Kidney (tissue), 22 donors: ENCODE measurements at regions of chr12 and their contacts with region 1.

Region 1: GRCh38 chr12:117025481-117026151 is 73.6 kb downstream of the TESC start:
- DNase-seq: peak; percentile 84 to 87 (median 87)
- H3K4me3 ChIP-seq: no peak overlapping the region
- H3K27ac ChIP-seq: no peak overlapping the region
- H3K4me1 ChIP-seq: peaks cover 0 to 5% (median 0%) of the 10 kb centered on the region in 3 donors
- H3K27me3 ChIP-seq: no peaks in the 10 kb centered on the region
- CTCF ChIP-seq: peak; percentile 91

Region 2: GRCh38 chr12:116863275-116863767 is 162.3 kb before region 1 on chr12:
- intact Hi-C with region 1: no loop called
- DNase-seq: no peak
- H3K4me3 ChIP-seq: no peak overlapping the region
- H3K27ac ChIP-seq: no peak overlapping the region
- H3K4me1 ChIP-seq: peaks cover 0 to 2% (median 0%) of the 10 kb centered on the region in 3 donors
- H3K27me3 ChIP-seq: no peaks in the 10 kb centered on the region
- CTCF ChIP-seq: peak; percentile 17

Region 3: GRCh38 chr12:116959845-116960514 is 65.6 kb before region 1 on chr12:
- intact Hi-C with region 1: no loop called
- DNase-seq: no peak
- H3K4me3 ChIP-seq: no peak overlapping the region
- H3K27ac ChIP-seq: no peak overlapping the region
- H3K4me1 ChIP-seq: no peaks in the 10 kb centered on the region
- H3K27me3 ChIP-seq: no peaks in the 10 kb centered on the region
- CTCF ChIP-seq: no peak

Region 4: DNA sequence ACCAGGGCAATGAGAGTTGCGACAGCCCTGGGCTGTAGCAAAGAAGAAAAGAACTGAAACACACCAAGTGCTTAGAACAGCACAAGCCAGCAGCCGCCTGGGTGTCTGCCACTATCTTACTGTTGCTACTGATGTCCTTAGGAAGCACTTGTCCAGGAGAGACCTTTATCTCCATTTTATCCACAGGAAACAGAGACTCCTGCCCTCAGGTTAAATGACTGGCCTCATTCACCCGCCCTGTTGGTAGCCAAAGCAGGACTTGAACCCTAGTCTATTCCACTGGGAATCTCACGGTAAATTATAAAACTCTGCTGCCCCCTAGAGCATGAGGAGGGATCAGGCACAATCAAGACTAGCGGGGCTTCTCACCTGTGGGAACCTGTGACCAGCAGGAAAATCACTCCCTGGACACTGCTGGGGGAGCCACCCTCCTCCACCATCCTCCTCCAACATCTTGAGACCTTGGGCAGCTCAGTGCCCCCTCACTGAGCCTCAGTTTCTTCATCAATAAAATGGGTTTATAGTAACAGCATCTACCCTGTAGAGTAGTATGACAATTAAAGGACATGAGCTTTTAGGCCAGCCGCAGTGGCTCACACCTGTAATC is 94.1 kb after region 1 on chr12:
- intact Hi-C with region 1: loop called (anchors 10 kb)
- DNase-seq: peak in 2 of 5 donors; percentile 54 to 57
- H3K4me3 ChIP-seq: no peak overlapping the region
- H3K27ac ChIP-seq: no peak overlapping the region
- H3K4me1 ChIP-seq: no peaks in the 10 kb centered on the region
- H3K27me3 ChIP-seq: no peaks in the 10 kb centered on the region
- CTCF ChIP-seq: peak; percentile 68

Region 5: DNA sequence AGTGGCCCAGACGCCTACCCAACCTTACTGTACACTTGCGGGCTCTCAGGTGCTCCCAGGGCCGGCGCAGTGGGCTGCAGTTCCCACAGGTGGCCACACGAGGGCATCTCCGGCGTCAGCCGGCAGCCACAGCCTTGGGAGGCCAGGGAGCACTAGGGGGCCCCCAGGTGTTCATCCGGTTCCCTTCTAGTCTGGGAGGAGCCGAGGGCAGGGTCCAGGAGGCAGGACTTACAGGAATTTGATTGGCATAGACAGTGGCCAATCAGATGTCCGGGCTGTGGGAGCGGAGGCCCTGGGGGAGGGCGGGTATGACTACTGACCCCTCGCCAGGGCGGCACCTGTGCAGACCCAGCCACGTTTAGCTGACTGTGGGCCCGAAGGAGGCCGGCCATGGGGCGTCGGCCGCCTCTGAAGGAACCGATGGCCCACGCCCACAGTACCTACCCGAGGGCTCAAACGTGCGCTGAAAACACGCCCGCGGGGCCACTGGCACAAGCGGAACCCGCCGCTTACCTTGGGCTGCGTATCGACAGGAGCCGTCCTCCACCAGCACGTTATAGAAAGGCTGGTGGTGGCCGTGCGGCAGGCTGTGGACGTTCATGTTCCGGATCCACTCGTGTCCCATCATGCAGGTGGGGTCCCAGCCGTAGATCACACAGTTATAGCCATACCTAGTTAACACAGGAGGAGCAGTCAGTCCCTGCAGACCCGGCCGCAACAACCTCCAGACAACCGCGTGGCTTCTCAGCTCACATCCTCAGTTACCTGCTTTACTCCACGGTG is 129.9 kb after region 1 on chr12:
- intact Hi-C with region 1: loop called (anchors 10 kb)
- DNase-seq: peak; percentile 76 to 90 (median 83)
- H3K4me3 ChIP-seq: no peak overlapping the region
- H3K27ac ChIP-seq: no peak overlapping the region
- H3K4me1 ChIP-seq: peaks cover 0 to 2% (median 0%) of the 10 kb centered on the region in 3 donors
- H3K27me3 ChIP-seq: no peaks in the 10 kb centered on the region
- CTCF ChIP-seq: peak; percentile 74